Dendritic cell treated with granulocyte-macrophage colony-stimulating factor and Interleukin-4, amounts not matched to agents 40 ng/mL and 50 ng/mL, for 4 days (primary cell): ENCODE measurements at regions of chr17 and their contacts with region 1.

Region 1: GRCh38 chr17:44218344-44219107 is 949 bp downstream of the UBTF start:
- H3K4me3 Mint-ChIP-seq: peak overlapping the region; percentile 65
- H3K27ac Mint-ChIP-seq: peak overlapping the region; percentile 66
- H3K4me1 Mint-ChIP-seq: peaks cover 64% of the 10 kb centered on the region
- H3K27me3 Mint-ChIP-seq: peaks cover 3% of the 10 kb centered on the region

Region 2: GRCh38 chr17:44186307-44187130 is 32.0 kb before region 1 on chr17 and contains the start of gene TMUB2:
- intact Hi-C with region 1: loop called (anchors 1 kb)
- H3K4me3 Mint-ChIP-seq: peak within 1 kb of the TSS; percentile 99
- H3K27ac Mint-ChIP-seq: peak within 1 kb of the TSS; percentile 99
- H3K4me1 Mint-ChIP-seq: peaks cover 52% of the 10 kb centered on the region
- H3K27me3 Mint-ChIP-seq: no peaks in the 10 kb centered on the region

Region 3: GRCh38 chr17:44199553-44200477 is 18.7 kb before region 1 on chr17 and contains the start of gene ATXN7L3:
- intact Hi-C with region 1: loop called (anchors 2 kb)
- H3K4me3 Mint-ChIP-seq: peak within 1 kb of the TSS; percentile 92
- H3K27ac Mint-ChIP-seq: peak within 1 kb of the TSS; percentile 97
- H3K4me1 Mint-ChIP-seq: peaks cover 75% of the 10 kb centered on the region
- H3K27me3 Mint-ChIP-seq: no peaks in the 10 kb centered on the region

Region 4: GRCh38 chr17:44257815-44258760 is 39.6 kb after region 1 on chr17:
- intact Hi-C with region 1: no loop called
- H3K4me3 Mint-ChIP-seq: no peak overlapping the region
- H3K27ac Mint-ChIP-seq: no peak overlapping the region
- H3K4me1 Mint-ChIP-seq: no peaks in the 10 kb centered on the region
- H3K27me3 Mint-ChIP-seq: peaks cover 19% of the 10 kb centered on the region

Region 5: DNA sequence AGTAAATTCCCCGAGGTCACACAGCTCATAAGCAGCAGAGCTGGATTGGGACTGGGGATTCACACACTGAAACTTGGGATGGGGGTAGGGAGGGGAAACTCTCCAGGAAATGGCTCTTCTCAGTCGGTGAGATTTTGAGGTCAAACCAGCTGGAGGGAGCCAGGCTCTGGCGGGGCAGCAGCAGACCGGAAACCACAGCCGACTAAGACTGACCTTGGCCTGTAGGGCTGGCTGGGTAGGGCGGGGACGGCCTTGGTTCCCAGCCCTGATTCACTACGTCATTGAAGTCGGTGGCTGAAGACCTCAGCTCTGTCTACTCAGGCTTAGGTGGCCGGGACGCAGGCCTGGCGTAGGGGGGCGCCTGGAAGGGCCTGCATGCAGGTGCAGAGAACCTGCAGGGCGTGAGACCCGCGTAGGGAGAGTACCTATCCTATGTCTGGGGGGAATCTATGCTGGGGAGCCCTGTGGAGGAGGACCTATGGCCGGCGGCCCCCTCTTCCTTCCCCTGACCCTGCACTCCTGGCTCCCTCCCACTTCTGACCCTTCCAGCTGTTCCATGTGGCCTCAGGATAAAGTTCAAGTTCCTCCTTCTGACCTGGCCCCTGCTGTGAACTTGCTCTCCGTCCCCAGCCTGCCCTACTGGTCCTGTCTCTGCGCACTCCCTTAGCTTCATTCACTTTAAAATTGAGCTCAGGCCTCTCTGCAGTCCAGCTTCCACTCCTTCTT is 61.3 kb after region 1 on chr17:
- intact Hi-C with region 1: loop called (anchors 5 kb)
- H3K4me3 Mint-ChIP-seq: peak overlapping the region; percentile 32
- H3K27ac Mint-ChIP-seq: peak overlapping the region; percentile 86
- H3K4me1 Mint-ChIP-seq: peaks cover 30% of the 10 kb centered on the region
- H3K27me3 Mint-ChIP-seq: peaks cover 20% of the 10 kb centered on the region

Region 6: DNA sequence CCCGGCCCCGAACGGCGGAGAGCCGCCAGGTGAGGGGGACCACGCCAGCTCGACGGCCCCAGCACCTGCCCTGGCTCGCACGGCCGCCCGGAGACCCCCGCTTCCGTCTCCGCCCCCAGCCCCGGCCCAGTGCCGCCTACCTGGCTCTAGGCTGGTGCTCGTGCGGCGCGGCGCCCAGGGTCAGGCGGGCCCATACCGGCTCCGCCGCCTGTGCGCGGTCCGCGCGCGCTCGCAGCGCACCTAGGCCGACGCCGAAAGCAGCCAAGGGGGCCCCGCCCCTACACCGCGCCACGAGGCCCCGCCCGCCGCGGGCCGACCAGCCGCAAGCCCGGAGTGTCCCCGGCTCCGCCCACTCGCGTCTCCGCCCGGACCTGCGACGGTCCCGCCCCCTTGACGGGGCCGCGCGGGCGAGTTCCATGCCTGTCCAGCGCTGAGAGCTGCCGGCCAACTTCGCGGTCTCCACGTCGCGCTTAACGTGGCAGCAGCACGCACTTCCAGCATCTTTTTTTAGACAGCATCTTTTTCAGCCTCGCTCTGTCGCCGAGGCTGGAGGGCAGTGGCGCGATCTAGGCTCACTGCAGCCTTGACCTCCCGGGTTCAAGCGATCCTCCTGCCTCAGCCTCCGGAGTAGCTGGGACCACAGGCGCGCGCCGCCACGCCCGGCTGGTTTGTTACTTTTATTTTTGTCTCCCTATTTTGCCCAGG is 106.2 kb after region 1 on chr17 and contains the start of gene SLC25A39:
- intact Hi-C with region 1: loop called (anchors 2 kb)
- H3K4me3 Mint-ChIP-seq: peak within 1 kb of the TSS; percentile 90
- H3K27ac Mint-ChIP-seq: peak within 1 kb of the TSS; percentile 98
- H3K4me1 Mint-ChIP-seq: peaks cover 19% of the 10 kb centered on the region
- H3K27me3 Mint-ChIP-seq: no peaks in the 10 kb centered on the region

Region 7: GRCh38 chr17:44344939-44345453 is 126.5 kb after region 1 on chr17 and contains the start of gene GRN:
- intact Hi-C with region 1: loop called (anchors 5 kb)
- H3K4me3 Mint-ChIP-seq: peak within 1 kb of the TSS; percentile 98
- H3K27ac Mint-ChIP-seq: peak within 1 kb of the TSS; percentile 98
- H3K4me1 Mint-ChIP-seq: peaks cover 77% of the 10 kb centered on the region
- H3K27me3 Mint-ChIP-seq: no peaks in the 10 kb centered on the region